IMR-90 (cell line): ENCODE measurements at regions of chr6 and their contacts with region 1.

Region 1: GRCh38 chr6:115485400-115485799 is 575.3 kb downstream of the FRK start:
- DNase-seq: peak; percentile 1
- ATAC-seq: peak; percentile 37
- H3K4me3 ChIP-seq: no peak overlapping the region
- H3K27ac ChIP-seq: no peak overlapping the region
- H3K4me1 ChIP-seq: no peaks in the 10 kb centered on the region
- H3K27me3 ChIP-seq: no peaks in the 10 kb centered on the region
- CTCF ChIP-seq: no peak
- POLR2A ChIP-seq: no peak
- RAD21 ChIP-seq: no peak

Region 2: DNA sequence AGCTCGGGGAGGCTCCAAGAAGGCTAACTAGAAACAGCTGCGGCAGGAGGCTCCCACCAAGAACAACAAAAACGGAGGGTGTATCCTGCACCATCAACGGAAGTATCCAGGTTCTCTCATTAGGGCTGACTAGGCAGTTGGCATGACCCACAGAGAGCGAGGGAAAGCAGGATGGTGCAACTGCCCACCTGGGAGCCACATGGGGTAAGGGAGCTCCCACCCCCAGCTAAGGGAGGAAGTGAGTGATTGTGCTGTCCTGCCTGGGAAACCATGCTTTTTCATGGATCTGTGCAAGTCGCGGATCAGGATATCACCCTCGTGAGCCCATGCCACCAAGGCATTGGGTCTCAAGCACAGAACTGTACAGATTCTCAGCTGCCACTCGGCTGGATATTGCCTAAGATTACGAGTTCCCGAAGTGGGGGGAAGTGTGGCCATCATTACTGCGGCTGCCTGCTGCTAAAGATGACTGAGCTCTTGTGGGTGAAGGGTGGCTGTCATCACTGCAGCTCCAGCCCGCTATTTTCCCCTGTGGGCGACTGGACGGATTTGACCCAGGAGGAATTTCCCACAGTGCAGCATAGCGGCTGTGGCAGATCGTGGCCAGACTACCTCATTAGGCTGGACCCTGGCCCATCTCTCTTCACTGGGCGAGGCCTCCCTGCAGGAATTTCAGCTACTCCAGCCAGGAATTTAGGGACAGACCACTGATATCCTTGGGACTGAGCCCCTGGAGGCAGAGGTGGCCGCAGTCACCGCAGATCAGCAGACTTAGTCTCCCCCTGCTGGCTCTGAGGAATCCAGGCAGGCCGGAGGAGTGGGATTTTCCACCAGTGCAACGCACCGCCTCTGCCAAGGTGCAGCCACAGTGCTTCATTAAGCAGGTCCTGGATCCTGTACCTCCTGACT is 59.6 kb after region 1 on chr6:
- CTCF ChIA-PET with region 1: no interaction called
- POLR2A ChIA-PET with region 1: no interaction called
- dilution Hi-C with region 1: no loop called
- in situ Hi-C with region 1: no loop called
- intact Hi-C with region 1: no loop called
- DNase-seq: no peak
- ATAC-seq: no peak
- H3K4me3 ChIP-seq: no peak overlapping the region
- H3K27ac ChIP-seq: no peak overlapping the region
- H3K4me1 ChIP-seq: no peaks in the 10 kb centered on the region
- H3K27me3 ChIP-seq: no peaks in the 10 kb centered on the region
- CTCF ChIP-seq: peak; percentile 19; the same call in 1 of the 2 replicates
- POLR2A ChIP-seq: no peak
- RAD21 ChIP-seq: no peak

Region 3: GRCh38 chr6:116100419-116101301 is 615.3 kb after region 1 on chr6 and contains the start of gene NT5DC1:
- CTCF ChIA-PET with region 1: no interaction called
- POLR2A ChIA-PET with region 1: no interaction called
- dilution Hi-C with region 1: no loop called
- in situ Hi-C with region 1: no loop called
- intact Hi-C with region 1: loop called (anchors 10 kb)
- DNase-seq: peak; percentile 67
- ATAC-seq: peak; percentile 96
- H3K4me3 ChIP-seq: peak within 1 kb of the TSS; percentile 89
- H3K27ac ChIP-seq: peak within 1 kb of the TSS; percentile 73
- H3K4me1 ChIP-seq: peaks cover 13% of the 10 kb centered on the region
- H3K27me3 ChIP-seq: no peaks in the 10 kb centered on the region
- CTCF ChIP-seq: no peak; the same call in none of the 2 replicates
- POLR2A ChIP-seq: no peak; the same call in 1 of the 2 replicates
- RAD21 ChIP-seq: peak; percentile 22; the same call in 1 of the 2 replicates
- total RNA-seq, gene NT5DC1: 7.5 and 11.7 TPM in 2 replicates